ENCODE measurements at regions of chr19 and their contacts with region 1.

Region 1: GRCh38 chr19:47243776-47244547 is 12.4 kb upstream of the CCDC9 start:
- H3K4me3 Mint-ChIP-seq: peak overlapping the region; percentile 68
- H3K27ac Mint-ChIP-seq: no peak overlapping the region
- H3K4me1 Mint-ChIP-seq: peaks cover 12% of the 10 kb centered on the region
- H3K27me3 Mint-ChIP-seq: peaks cover 28% of the 10 kb centered on the region

Region 2: GRCh38 chr19:47152224-47153017 is 91.5 kb before region 1 on chr19:
- intact Hi-C with region 1: loop called (anchors 1 kb)
- H3K4me3 Mint-ChIP-seq: no peak overlapping the region
- H3K27ac Mint-ChIP-seq: no peak overlapping the region
- H3K4me1 Mint-ChIP-seq: peaks cover 11% of the 10 kb centered on the region
- H3K27me3 Mint-ChIP-seq: no peaks in the 10 kb centered on the region

Region 3: DNA sequence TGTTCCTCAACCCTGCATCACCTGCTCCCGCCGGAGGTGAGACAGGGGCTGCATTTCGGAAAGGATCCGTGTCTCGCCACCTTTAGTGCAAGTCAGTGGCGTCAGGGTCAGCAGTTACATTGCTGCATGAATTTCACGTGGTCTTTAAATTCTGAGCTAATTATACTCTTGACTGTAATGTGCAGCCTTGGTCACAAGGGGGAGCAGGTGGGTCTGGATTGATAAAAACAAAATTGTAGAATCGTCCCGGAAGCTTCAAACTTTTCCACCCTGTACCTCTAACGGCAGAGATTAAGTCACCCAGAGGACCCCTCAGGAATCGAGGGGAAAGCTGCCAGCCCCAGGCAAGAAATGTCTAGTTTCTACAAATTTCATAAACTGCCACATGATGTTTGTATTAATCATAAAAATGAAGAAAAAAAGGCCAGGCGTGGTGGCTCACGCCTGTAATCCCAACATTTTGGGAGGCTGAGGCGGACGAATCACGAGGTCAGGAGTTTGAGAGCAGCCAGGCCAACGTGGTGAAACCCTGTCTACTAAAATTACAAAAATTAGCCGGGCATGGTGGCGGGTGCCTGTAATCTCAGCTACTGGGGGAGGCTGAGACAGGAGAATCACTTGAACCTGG is 33.2 kb before region 1 on chr19:
- intact Hi-C with region 1: loop called (anchors 1 kb)
- H3K4me3 Mint-ChIP-seq: no peak overlapping the region
- H3K27ac Mint-ChIP-seq: peak overlapping the region; percentile 62
- H3K4me1 Mint-ChIP-seq: peaks cover 10% of the 10 kb centered on the region
- H3K27me3 Mint-ChIP-seq: no peaks in the 10 kb centered on the region

Region 4: GRCh38 chr19:47226426-47227351 is 17.3 kb before region 1 on chr19:
- intact Hi-C with region 1: loop called (anchors 1 kb)
- H3K4me3 Mint-ChIP-seq: no peak overlapping the region
- H3K27ac Mint-ChIP-seq: no peak overlapping the region
- H3K4me1 Mint-ChIP-seq: peaks cover 22% of the 10 kb centered on the region
- H3K27me3 Mint-ChIP-seq: peaks cover 2% of the 10 kb centered on the region

Region 5: DNA sequence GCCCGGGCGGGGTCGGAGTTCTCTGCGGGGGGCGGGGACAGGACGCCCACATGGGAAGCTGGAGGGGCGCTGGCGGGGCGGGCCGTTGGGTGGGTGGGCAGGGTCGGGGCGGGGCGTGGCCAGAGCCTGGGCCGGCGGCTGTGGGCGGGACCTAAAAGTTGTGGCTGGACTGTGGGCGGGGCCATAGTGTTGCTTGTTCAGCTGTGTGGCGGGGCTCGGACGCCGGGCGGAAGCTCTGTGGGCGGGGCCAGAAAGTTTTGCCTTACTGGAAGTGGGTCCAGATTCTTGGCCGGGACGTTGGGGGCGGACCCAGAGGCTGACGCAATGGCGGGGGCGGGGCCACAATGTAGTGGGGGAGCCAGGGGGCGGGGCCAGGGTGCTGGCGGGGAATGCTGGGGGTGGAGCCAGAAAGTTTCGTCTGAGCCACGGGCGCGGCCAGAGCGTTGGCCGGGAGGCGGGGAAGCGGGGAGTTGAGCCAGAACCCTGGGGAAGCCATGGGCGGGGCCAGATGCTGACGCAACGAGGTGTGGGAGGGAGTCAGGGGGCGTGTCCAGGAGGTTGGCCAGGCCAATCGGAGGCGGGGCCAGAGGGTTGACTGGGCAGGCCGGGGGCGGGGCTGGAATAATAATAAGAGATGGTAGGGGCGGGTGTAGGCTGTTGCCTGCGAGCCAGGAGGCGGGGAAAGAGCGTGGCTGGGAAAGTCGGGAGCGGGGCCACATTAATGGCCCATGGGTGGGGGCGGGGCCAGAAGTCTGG is 12.9 kb after region 1 on chr19:
- intact Hi-C with region 1: loop called (anchors 1 kb)
- H3K4me3 Mint-ChIP-seq: peak overlapping the region; percentile 87
- H3K27ac Mint-ChIP-seq: peak overlapping the region; percentile 97
- H3K4me1 Mint-ChIP-seq: peaks cover 42% of the 10 kb centered on the region
- H3K27me3 Mint-ChIP-seq: peaks cover 6% of the 10 kb centered on the region